Transverse colon (tissue), 4 donors: ENCODE measurements at regions of chr5 and their contacts with region 1.

Region 1: DNA sequence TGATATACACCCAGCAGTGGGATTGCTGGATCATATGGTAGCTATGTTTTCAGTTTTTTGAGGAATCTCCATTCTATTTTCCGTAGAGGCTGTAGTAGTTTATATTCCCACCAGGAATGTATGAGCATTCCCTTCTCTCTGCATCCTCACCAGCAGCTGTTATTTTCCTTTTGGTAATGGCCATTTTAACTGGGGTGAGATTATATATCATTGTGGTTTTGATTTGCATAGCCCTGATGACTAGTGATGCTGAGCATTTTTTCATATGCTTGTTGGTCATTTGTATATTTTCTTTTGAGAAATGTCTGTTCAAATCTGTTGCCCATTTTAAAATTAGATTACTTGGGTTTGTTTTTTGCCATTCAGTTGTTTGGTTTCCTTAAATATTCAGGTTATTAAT is 11.2 kb upstream of the PPIC start:
- DNase-seq: no peak
- H3K4me3 ChIP-seq: no peak overlapping the region
- H3K27ac ChIP-seq: no peak overlapping the region
- H3K4me1 ChIP-seq: no peaks in the 10 kb centered on the region
- H3K27me3 ChIP-seq: no peaks in the 10 kb centered on the region
- CTCF ChIP-seq: no peak
- EP300 ChIP-seq: no peak
- POLR2A ChIP-seq: no peak

Region 2: GRCh38 chr5:123094919-123095797 is 47.5 kb after region 1 on chr5:
- in situ Hi-C with region 1: no loop called
- intact Hi-C with region 1: loop called (anchors 2 kb)
- DNase-seq: no peak
- H3K4me3 ChIP-seq: peak overlapping the region in 2 of 4 donors; percentile 8 to 15
- H3K27ac ChIP-seq: peak overlapping the region in 1 of 4 donors; percentile 20
- H3K4me1 ChIP-seq: peaks cover 0 to 26% (median 10%) of the 10 kb centered on the region in 4 donors
- H3K27me3 ChIP-seq: peaks cover 100% of the 10 kb centered on the region
- CTCF ChIP-seq: no peak
- EP300 ChIP-seq: no peak
- POLR2A ChIP-seq: no peak